ENCODE measurements at regions of chr15 and their contacts with region 1.

Region 1: DNA sequence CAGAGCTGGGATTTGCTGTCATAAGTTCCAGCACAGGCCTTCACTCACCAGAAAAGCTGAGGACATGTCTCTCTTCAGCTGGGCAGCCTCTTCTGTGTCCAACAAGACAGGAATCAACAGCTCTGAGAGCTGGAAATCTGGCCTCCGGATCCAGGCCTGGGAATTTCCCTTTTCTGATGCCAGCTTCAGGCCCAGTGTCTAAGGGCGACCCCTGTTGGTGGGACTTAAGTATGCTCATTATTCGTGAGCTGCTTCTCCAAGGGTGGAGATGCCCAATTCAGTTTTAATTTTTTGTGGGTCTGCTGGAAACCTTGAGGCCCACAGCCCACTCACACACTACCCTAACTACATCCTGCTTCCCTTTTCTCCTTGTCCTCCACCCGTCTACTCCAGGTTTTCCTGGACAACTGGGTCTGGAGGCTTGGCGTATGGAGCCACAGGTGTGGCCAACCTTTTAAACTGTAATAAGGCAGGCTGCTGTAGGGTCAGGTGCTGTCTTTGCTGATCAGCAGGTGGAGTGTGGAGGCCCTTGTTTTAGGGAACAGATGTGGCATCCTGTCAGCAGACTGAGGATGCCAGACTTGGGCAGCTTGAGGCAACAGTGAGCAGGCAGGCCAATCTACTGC is 2.6 kb upstream of the CEMIP start:
- DNase-seq: peak; percentile 77

Region 2: DNA sequence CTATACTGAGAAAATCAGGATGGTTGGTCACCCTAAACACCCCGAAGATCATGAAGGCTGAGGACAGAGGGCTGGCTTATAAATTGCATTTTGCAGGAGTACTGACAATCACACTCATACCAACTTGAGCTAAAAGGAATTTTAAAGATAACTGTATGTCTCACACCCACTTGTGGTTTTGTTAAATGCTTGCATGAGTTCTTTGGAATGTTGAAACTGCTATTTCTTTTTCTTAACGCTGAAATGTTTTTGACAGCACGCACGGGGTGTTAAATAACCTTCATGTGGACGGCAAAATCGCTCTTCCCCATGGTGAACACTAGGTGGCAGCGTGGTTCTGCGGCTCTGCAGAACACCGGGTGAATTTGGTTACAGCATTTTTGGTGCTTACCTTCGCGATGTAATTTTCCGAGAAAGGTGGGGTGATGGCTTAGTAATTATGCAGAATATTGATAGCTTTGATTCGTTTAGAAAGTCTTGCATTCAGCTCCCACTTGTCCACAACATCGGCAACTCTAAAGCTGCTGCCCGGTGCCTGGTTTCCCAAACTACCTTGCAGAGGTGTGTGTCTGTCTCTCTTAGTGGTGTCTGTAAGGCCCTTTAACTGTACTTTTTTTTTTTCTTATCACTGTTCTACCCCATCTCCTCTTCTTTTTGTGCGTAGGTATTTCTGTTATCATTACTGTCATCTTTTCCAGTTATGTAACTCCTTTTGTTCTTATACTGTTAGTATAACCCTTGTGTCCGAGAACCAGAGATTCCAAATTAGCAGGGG is 320.7 kb before region 1 on chr15:
- in situ Hi-C with region 1: loop called (anchors 10 kb)
- DNase-seq: peak; percentile 78

Region 3: GRCh38 chr15:80570553-80570952 is 206.0 kb before region 1 on chr15:
- in situ Hi-C with region 1: loop called (anchors 10 kb)
- DNase-seq: no peak

Measured in KBM-7 (cell line).